ENCODE measurements at regions of chr15 and their contacts with region 1.

Region 1: GRCh38 chr15:64153480-64154367 is 2.2 kb downstream of the SNX22 start:
- DNase-seq: peak; percentile 87
- ATAC-seq: peak; percentile 89
- H3K4me3 ChIP-seq: no peak overlapping the region
- H3K27ac ChIP-seq: no peak overlapping the region
- H3K4me1 ChIP-seq: no peaks in the 10 kb centered on the region; the same call in 1 of the 2 replicates
- H3K27me3 ChIP-seq: peaks cover 10% of the 10 kb centered on the region
- CTCF ChIP-seq: peak; percentile 88

Region 2: GRCh38 chr15:64093627-64094417 is 59.9 kb before region 1 on chr15 and contains the start of gene CIAO2A:
- CTCF ChIA-PET with region 1: interaction called, 3 read pairs
- POLR2A ChIA-PET with region 1: no interaction called
- intact Hi-C with region 1: loop called (anchors 5 kb)
- DNase-seq: peak; percentile 97
- ATAC-seq: peak; percentile 82
- H3K4me3 ChIP-seq: peak within 1 kb of the TSS; percentile 90
- H3K27ac ChIP-seq: peak within 1 kb of the TSS; percentile 49
- H3K4me1 ChIP-seq: peaks cover 28% of the 10 kb centered on the region
- H3K27me3 ChIP-seq: no peaks in the 10 kb centered on the region
- CTCF ChIP-seq: no peak
- total RNA-seq, gene CIAO2A: 83.7 and 92.4 TPM in 2 replicates

Region 3: GRCh38 chr15:64412216-64412615 is 258.5 kb after region 1 on chr15:
- CTCF ChIA-PET with region 1: no interaction called
- POLR2A ChIA-PET with region 1: no interaction called
- intact Hi-C with region 1: no loop called
- DNase-seq: no peak
- ATAC-seq: no peak
- H3K4me3 ChIP-seq: no peak overlapping the region
- H3K27ac ChIP-seq: no peak overlapping the region
- H3K4me1 ChIP-seq: no peaks in the 10 kb centered on the region
- H3K27me3 ChIP-seq: no peaks in the 10 kb centered on the region
- CTCF ChIP-seq: no peak